ENCODE measurements at regions of chr1 and their contacts with region 1.

Region 1: GRCh38 chr1:241485554-241485992 is 34.0 kb downstream of the FH start:
- DNase-seq: peak; percentile 35
- CTCF ChIP-seq: peak; percentile 51

Region 2: DNA sequence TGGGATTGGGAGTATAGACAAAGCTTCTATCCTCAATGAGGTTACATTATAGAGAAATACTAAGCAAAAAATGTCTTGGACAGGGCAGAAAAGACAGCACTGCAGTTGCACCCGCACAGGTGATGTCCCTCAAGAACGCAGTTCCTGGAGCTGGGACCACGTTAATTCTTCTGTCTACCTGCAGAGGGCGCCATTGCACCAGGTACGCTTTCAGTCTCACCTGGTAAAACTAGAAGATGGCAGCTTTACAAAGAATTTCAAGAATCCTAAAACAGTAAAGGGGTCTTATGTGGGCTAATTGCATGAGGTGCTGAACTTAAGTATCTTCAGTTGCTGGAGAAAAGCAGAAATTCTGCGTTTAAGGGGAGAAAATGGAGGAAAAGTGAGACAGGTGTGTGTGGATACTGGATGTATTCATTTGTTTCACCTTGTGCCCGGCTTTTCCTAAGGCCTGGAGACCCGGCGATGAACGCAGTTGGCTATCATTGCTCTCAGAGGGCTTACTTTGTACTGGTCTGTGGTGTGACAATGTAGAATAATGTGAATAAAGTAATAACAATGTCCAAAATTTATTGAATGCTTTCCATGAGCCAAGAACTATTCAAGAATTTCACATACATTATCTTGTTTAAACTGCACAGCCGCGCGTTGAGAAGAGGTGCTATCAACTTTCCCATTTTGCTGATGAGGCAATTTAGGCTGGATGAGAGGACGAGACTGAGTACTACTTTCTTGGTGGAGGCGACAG is 597.4 kb before region 1 on chr1:
- in situ Hi-C with region 1: loop called (anchors 25 kb)
- DNase-seq: peak; percentile 52
- CTCF ChIP-seq: peak; percentile 74

Region 3: DNA sequence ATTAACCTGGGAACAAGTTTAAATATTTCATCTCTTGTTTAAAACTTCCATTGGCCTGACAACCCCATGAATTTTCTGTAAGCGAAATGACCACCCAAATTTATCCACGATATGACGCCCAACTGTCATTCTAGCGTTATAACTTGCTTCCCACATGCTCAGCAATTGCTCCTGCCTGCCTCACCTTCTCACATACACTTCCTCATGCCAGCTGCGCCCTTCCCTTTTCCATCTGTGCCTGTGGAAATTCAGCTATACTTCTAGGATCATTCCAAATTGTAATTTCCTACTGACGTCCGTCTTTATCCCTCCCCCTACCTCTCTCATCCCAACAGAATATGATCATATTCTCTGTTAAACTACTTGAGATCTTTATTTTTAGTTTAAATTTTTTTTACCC is 376.5 kb before region 1 on chr1:
- in situ Hi-C with region 1: no loop called
- DNase-seq: no peak
- CTCF ChIP-seq: no peak

Measured in GM13977 (cell line).